PC-3 (cell line): ENCODE measurements at regions of chr1 and their contacts with region 1.

Region 1: GRCh38 chr1:221117548-221117951 is 238.3 kb downstream of the HLX start:
- DNase-seq: peak; percentile 77
- ATAC-seq: peak; percentile 94
- H3K4me3 ChIP-seq: no peak overlapping the region
- H3K27ac ChIP-seq: peak overlapping the region; percentile 44
- H3K4me1 ChIP-seq: peaks cover 30% of the 10 kb centered on the region
- H3K27me3 ChIP-seq: no peaks in the 10 kb centered on the region
- CTCF ChIP-seq: no peak

Region 2: DNA sequence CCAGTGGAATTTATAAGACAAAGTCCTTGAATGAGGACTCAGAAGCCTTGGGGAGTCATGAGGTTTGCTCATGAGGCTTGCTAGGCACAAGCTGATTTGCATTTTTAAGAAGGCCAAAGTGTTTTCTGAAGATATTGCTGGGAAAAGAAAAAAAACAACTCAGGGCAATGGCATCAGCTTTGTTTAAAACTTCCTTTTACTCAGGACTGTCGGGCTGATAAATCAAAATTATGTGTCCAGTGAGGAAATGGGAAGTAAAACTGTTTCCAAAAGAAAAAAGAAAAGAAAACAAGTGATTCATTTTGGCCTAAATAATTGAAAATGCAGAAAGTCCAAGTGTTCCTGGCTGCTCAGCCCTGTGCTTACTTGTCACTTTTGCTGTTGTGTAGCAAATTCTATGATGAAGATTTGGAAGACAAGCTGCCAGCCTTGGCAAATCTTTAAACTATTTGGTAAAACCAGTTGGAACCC is 44.1 kb after region 1 on chr1:
- CTCF ChIA-PET with region 1: no interaction called
- POLR2A ChIA-PET with region 1: no interaction called
- intact Hi-C with region 1: loop called (anchors 5 kb)
- DNase-seq: no peak
- ATAC-seq: no peak
- H3K4me3 ChIP-seq: no peak overlapping the region
- H3K27ac ChIP-seq: no peak overlapping the region
- H3K4me1 ChIP-seq: peaks cover 20% of the 10 kb centered on the region
- H3K27me3 ChIP-seq: no peaks in the 10 kb centered on the region
- CTCF ChIP-seq: no peak

Region 3: DNA sequence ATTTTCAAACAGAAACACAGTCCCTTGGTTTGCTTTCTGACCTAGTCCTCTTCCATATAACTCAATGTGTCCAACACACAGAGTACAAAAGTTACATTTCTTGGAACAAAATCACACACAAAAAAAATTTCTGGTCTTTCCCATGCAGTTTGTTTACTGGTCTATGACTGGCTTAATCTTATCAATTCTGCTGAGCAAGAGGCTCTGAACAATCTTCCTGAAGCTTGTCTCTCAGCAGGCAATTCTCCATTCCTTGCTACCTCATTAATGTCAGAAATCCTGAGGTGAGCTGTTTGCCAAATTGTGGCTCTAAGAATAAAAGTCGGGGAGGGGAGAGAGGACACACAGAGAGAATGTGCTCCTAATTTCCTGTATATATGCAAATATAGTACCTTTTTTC is 185.3 kb after region 1 on chr1:
- CTCF ChIA-PET with region 1: no interaction called
- POLR2A ChIA-PET with region 1: no interaction called
- intact Hi-C with region 1: no loop called
- DNase-seq: no peak
- ATAC-seq: no peak
- H3K4me3 ChIP-seq: no peak overlapping the region
- H3K27ac ChIP-seq: no peak overlapping the region
- H3K4me1 ChIP-seq: no peaks in the 10 kb centered on the region
- H3K27me3 ChIP-seq: 0 out of 2 replicates have a peak, but pooled peaks cover 10% of the 10 kb centered on the region
- CTCF ChIP-seq: no peak